ENCODE measurements at regions of chr15 and their contacts with region 1.

Region 1: GRCh38 chr15:67101911-67102598 is 36.7 kb downstream of the SMAD3 start:
- DNase-seq: peak; percentile 65
- ATAC-seq: peak; percentile 40
- H3K4me3 Mint-ChIP-seq: no peak overlapping the region
- H3K27ac Mint-ChIP-seq: no peak overlapping the region
- H3K4me1 Mint-ChIP-seq: peaks cover 32% of the 10 kb centered on the region
- H3K27me3 Mint-ChIP-seq: no peaks in the 10 kb centered on the region

Region 2: DNA sequence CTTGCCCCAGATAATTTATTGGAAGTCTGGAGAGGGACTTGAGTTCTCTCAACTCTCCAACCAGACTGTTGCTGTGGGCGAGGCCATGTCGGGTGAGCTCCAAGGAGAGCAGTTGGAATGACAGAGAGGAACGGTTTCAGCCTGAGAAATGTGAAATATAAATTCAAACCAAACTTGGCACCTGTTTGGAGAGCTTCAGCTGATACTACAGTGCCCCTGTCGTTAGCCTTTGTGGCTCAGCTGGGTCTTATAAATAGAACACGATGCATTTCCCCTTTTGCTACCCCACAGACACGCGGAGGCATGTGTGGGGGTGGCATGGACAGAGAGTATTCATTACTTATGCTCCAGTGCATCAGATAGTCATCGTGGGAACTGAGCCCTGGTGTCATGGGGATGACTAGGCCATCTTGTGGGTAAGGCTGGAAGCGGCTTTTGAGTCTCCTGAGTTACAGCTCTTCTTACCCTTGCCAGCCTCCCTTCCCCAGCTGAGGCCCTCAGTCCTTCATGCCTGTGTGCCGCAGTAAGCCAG is 21.1 kb before region 1 on chr15:
- CTCF ChIA-PET with region 1: interaction called, 25 read pairs
- POLR2A ChIA-PET with region 1: interaction called, 34 read pairs
- intact Hi-C with region 1: loop called (anchors 1 kb)
- DNase-seq: peak; percentile 85
- ATAC-seq: peak; percentile 57
- H3K4me3 Mint-ChIP-seq: no peak overlapping the region
- H3K27ac Mint-ChIP-seq: peak overlapping the region; percentile 82
- H3K4me1 Mint-ChIP-seq: peaks cover 92% of the 10 kb centered on the region
- H3K27me3 Mint-ChIP-seq: no peaks in the 10 kb centered on the region

Region 3: GRCh38 chr15:67114846-67115600 is 13.0 kb after region 1 on chr15:
- CTCF ChIA-PET with region 1: interaction called, 16 read pairs
- POLR2A ChIA-PET with region 1: interaction called, 7 read pairs
- intact Hi-C with region 1: no loop called
- DNase-seq: no peak
- ATAC-seq: peak; percentile 68
- H3K4me3 Mint-ChIP-seq: no peak overlapping the region
- H3K27ac Mint-ChIP-seq: peak overlapping the region; percentile 82
- H3K4me1 Mint-ChIP-seq: peaks cover 93% of the 10 kb centered on the region
- H3K27me3 Mint-ChIP-seq: no peaks in the 10 kb centered on the region

Region 4: DNA sequence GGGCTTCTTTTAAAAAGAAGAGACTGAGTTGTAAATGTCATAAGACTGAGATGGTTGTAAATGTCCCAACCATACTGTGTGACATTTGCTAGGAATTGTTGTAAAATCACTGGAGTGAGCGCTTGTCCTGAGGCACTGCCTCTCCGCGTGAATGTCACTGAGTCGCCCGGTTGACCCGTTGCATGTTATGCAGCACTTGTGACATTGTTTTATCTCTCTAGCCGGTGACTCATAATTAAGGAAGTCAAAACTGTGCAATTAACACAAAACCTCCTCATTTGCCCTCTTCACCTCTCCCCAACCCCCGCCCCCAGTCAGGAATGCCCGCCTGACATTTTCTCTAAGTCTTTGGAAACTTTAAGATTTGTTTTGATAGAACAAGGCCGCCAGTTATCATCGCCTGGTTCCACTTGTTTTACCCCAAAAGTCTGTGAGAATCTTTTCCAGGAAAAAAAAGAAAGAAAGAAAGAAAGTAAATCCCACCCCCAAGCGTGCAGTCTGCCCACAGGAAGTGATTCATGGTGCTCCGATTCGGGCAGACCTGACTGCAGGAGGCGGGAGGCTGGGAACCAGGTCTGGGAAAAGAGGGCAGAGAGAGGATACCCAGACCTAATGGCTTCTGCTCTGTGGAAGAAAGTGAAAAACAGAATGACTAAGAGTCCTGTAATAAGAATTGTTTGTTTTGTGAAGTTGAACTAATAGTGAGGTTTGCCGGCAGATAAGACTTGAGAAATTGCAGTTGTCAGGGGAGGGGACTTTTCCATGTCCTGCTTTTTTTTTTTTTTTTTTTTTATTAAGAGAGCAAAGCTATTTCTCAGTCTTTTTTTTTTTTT is 48.2 kb after region 1 on chr15:
- CTCF ChIA-PET with region 1: interaction called, 6 read pairs
- POLR2A ChIA-PET with region 1: no interaction called
- intact Hi-C with region 1: loop called (anchors 1 kb)
- DNase-seq: peak; percentile 74
- ATAC-seq: peak; percentile 67
- H3K4me3 Mint-ChIP-seq: peak overlapping the region; percentile 60
- H3K27ac Mint-ChIP-seq: peak overlapping the region; percentile 82
- H3K4me1 Mint-ChIP-seq: peaks cover 67% of the 10 kb centered on the region
- H3K27me3 Mint-ChIP-seq: no peaks in the 10 kb centered on the region

Region 5: GRCh38 chr15:67254238-67255175 is 152.5 kb after region 1 on chr15 and contains the starts of genes AAGAB and IQCH:
- CTCF ChIA-PET with region 1: no interaction called
- POLR2A ChIA-PET with region 1: no interaction called
- intact Hi-C with region 1: loop called in 1 of 2 experiments (anchors 1 kb)
- DNase-seq: peak; percentile 98
- ATAC-seq: peak; percentile 93
- H3K4me3 Mint-ChIP-seq: peak within 1 kb of the TSS; percentile 100
- H3K27ac Mint-ChIP-seq: peak within 1 kb of the TSS; percentile 99
- H3K4me1 Mint-ChIP-seq: peaks cover 37% of the 10 kb centered on the region
- H3K27me3 Mint-ChIP-seq: no peaks in the 10 kb centered on the region
- total RNA-seq, gene AAGAB: 43.9 to 48.6 TPM
- total RNA-seq, gene IQCH: 1.8 to 2.1 TPM

Region 6: GRCh38 chr15:67762610-67763368 is 660.7 kb after region 1 on chr15:
- CTCF ChIA-PET with region 1: no interaction called
- POLR2A ChIA-PET with region 1: no interaction called
- intact Hi-C with region 1: loop called in 1 of 2 experiments (anchors 5 kb)
- DNase-seq: peak; percentile 81
- ATAC-seq: peak; percentile 99
- H3K4me3 Mint-ChIP-seq: no peak overlapping the region
- H3K27ac Mint-ChIP-seq: peak overlapping the region; percentile 79
- H3K4me1 Mint-ChIP-seq: peaks cover 76% of the 10 kb centered on the region
- H3K27me3 Mint-ChIP-seq: no peaks in the 10 kb centered on the region